Activated CD8-positive, alpha-beta T cell treated with anti-CD3 and anti-CD28 coated beads, Interleukin-2, amount 10 ng/mL, durations not matched to agents 7 days and 5 days (primary cell): ENCODE measurements at regions of chr3 and their contacts with region 1.

Region 1: DNA sequence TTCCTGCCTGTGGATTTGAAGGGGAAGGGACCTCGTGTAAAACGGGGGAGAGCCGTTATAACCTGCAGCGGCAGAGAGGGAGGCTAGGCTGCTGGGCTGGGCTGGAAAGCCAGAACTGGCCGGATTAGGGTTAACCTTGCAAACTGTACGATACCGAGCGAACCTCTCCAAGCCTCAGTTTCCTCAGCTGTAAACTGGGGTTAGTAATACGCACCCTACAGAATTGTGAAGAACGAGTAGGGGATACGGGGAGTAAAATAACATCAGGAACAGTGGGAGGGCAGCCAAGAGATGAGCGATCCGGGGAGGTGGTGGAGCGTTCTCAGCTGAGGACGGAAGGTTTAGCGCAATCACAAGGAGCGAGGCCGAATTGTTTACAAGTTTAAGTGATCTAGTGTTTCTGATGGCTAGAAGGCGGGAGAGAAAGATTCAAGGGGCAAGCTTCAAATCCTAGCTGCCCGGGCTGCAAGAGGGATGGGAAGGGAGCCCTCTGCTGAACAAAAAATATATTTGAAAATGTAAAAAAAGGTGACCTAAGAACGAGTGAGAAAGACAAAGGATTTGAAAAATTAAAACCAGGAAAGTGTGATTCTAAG is 768 bp upstream of the SEMA5B start:
- DNase-seq: peak; percentile 50
- ATAC-seq: peak; percentile 47
- H3K4me3 Mint-ChIP-seq: peak overlapping the region; percentile 66
- H3K27ac Mint-ChIP-seq: peak overlapping the region; percentile 41
- H3K4me1 Mint-ChIP-seq: peaks cover 16% of the 10 kb centered on the region
- H3K27me3 Mint-ChIP-seq: peaks cover 63% of the 10 kb centered on the region

Region 2: GRCh38 chr3:122754929-122755328 is 273.4 kb before region 1 on chr3:
- CTCF ChIA-PET with region 1: interaction called, 14 read pairs
- POLR2A ChIA-PET with region 1: no interaction called
- DNase-seq: peak; percentile 38
- ATAC-seq: peak; percentile 81
- H3K4me3 Mint-ChIP-seq: no peak overlapping the region
- H3K27ac Mint-ChIP-seq: no peak overlapping the region
- H3K4me1 Mint-ChIP-seq: peaks cover 20% of the 10 kb centered on the region
- H3K27me3 Mint-ChIP-seq: no peaks in the 10 kb centered on the region

Region 3: DNA sequence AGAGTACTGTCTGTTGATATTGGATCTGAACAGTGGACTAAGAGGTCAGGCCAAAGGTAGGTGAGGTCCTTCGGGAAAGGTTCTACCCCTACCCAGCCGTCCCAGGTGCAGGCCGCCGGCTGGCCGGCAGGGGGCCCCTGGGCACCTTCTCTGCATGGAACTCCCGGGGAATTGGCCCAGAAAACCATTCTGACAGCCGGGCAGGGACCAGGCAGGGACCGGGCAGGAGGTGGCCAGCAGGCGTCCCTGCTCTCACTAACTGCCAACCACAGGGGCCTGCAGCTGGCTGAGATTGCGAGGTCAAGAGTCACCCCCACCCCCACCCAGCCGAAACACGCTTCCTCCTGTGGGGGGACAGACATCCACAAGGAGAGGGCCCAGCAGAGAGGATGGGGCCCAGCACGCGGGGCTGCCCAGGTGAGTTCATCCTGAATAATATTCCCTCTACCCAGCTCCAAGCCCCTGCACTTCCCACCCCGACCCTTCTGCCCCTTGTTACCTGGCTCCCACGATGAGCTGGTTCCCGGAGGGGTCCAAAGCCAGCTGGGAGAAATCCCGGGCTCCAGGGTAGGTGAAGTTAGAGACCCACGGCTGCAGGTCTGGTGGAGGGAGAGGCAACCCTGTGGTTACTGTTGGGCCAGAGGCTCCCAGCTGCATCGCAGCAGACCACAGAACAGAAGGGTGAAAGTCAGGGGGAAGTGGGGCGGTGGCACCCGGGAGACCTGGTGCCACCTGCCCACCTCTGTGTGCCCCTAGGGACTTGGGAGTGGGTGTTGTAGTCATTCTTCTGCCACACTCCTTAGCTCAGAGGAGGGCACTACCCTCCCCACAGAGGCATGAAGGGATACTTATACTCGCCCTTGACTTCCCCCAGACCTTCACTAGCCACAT is 85.1 kb before region 1 on chr3:
- CTCF ChIA-PET with region 1: interaction called, 12 read pairs
- POLR2A ChIA-PET with region 1: no interaction called
- DNase-seq: peak; percentile 28
- ATAC-seq: peak; percentile 50
- H3K4me3 Mint-ChIP-seq: no peak overlapping the region
- H3K27ac Mint-ChIP-seq: no peak overlapping the region
- H3K4me1 Mint-ChIP-seq: peaks cover 12% of the 10 kb centered on the region
- H3K27me3 Mint-ChIP-seq: peaks cover 26% of the 10 kb centered on the region

Region 4: DNA sequence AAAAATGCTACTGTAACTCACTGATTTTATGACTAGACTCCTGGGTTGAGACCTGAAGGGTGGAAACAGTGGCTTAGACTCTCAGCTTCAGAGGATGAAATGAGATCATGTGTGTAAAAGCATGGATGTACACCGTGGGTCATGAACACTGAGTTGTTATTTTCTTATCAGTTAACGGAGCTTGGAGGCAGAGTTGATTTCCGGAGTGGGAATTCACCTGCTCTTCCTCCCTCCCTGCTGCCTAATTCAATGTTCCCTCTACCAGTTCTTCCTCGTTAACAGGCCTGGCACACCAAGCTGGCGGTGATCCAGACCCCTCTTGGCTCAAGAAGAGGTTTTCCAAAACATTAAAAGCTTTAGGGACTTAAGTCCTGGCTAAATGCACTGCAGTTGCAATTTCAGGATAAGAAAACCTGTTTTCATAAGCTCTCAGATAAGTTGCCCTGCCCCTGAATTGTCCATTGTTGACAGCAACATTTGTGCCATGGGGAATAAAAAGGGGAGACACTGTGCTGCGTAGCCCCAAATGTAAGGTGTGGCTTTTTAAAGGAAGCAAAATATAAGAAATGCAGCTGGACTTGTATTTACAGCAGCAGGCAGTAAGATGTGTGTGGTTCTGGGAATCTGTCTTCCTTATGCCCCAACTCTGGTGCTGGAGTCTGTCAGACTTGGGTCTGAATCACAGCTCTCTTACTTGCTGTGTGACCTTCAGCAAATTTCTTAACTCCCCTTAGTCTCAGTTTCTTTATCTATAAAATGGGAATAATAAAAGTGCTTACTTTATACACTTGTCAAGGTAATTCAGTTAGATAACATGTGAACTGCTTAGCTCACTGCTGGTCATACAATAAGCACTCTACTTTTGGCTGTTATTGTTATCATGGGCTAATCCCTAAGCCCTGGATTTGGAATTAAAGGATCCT is 48.4 kb after region 1 on chr3:
- CTCF ChIA-PET with region 1: no interaction called
- POLR2A ChIA-PET with region 1: no interaction called
- DNase-seq: no peak
- ATAC-seq: no peak
- H3K4me3 Mint-ChIP-seq: no peak overlapping the region
- H3K27ac Mint-ChIP-seq: no peak overlapping the region
- H3K4me1 Mint-ChIP-seq: peaks cover 15% of the 10 kb centered on the region
- H3K27me3 Mint-ChIP-seq: no peaks in the 10 kb centered on the region